ENCODE measurements at regions of chr3 and their contacts with region 1.

Region 1: DNA sequence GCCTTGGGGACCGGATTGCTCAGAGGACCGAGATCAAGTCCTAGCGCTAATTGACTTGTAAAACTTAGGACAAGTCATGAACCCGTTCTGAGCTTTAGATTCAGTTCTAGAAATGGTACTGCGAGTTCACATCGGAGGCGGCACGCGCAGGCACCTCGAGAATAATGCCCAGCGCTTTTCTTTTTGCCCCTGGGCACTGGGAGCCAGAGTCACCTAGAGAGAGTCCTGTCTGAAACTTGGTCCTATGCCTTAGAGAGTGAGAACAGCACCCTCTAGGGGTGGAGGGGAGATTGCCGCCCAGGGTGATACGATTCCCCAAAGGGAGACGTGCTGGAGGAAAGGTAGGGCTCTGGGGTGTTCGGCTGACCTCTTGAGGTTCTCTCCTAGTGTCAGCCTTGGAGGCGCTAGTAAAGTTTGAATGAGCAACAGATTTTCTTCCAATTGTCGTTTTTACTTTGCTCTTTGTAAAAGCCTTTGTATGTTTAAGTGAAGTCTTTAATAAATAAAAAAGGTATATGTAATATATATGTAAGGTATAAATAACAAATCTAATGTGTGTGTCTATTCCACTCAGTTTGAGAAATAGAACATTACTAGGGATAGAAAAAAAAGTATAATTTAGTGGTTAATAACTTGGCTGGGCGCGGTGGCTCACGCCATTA is 826 bp downstream of the EEF1AKMT4 start:
- DNase-seq: peak; percentile 90
- H3K4me3 ChIP-seq: peak overlapping the region; percentile 74 to 97 (median 79)
- H3K27ac ChIP-seq: peak overlapping the region; percentile 73
- H3K4me1 ChIP-seq: peaks cover 6% of the 10 kb centered on the region
- H3K27me3 ChIP-seq: no peaks in the 10 kb centered on the region
- CTCF ChIP-seq: peak; percentile 96 to 98

Region 2: DNA sequence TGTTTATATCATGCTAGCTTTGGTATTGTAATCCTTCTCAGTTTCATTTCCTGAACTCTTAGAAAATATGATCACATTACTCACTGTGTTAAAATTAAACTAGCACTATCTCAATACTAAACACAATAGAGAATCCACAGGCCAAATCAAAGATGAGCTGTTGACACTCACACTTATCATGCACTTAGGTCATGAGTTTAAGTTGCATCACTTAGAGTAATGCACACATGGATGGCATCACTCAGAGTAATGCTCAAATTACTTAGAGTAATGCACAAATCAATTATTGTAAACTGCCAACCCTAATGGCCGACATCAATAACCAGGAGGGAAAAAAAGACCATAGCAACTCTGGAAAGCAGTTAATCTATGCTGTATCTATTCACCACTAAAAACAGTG is 781.9 kb before region 1 on chr3:
- CTCF ChIA-PET with region 1: no interaction called
- dilution Hi-C with region 1: no loop called
- in situ Hi-C with region 1: no loop called
- intact Hi-C with region 1: loop called (anchors 1 kb)
- DNase-seq: no peak
- H3K4me3 ChIP-seq: no peak overlapping the region
- H3K27ac ChIP-seq: no peak overlapping the region
- H3K4me1 ChIP-seq: no peaks in the 10 kb centered on the region
- H3K27me3 ChIP-seq: peaks cover 2% of the 10 kb centered on the region
- CTCF ChIP-seq: no peak

Region 3: GRCh38 chr3:184135149-184135910 is 115.0 kb before region 1 on chr3 and contains the start of gene EIF2B5:
- CTCF ChIA-PET with region 1: no interaction called
- dilution Hi-C with region 1: no loop called
- in situ Hi-C with region 1: loop called in 1 of 2 experiments (anchors 5 kb)
- intact Hi-C with region 1: no loop called
- DNase-seq: peak; percentile 87
- H3K4me3 ChIP-seq: peak within 1 kb of the TSS; percentile 51 to 88 (median 86)
- H3K27ac ChIP-seq: peak within 1 kb of the TSS; percentile 51
- H3K4me1 ChIP-seq: peaks cover 12% of the 10 kb centered on the region
- H3K27me3 ChIP-seq: no peaks in the 10 kb centered on the region
- CTCF ChIP-seq: peak in 1 of 2 donors; percentile 47
- total RNA-seq, gene EIF2B5: 24.5 to 34.8 TPM

Region 4: DNA sequence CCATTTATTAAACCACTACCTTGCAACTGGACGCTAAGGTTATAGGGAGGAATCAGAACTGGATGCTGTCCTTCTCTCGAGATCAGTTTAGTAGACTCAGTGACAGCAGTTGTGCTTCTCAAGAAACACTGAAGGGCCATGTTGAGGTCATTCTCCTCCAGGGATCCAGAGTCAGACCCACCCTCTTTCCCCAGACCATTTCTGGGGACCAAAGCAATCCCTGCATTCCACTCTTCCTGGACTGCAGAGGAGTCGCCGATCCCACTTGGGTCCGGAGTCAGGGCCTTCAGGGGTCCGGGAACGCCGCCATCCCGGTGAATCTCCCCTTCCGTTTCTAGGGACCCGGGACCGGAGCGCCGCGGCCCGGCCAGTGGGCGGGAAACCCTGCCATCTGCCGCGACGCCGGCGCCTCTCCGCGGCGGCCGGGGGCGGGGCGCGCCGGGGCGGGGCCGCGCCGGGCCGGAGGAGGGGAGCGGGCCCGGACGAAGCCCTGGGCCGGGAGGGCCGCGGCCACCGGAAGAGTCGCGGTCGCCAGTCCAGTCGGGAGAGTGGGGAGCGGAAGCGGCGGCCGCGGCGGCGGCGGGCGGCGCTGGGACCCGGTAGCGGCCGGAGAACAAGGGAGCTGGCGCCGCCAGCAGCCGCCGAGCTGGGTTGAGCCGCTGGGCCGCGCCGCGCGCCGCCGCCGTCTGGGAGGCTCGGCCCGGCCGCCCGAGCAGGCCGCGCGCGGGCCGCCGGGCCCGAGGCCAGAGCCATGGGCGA is 95.2 kb before region 1 on chr3 and contains the start of gene DVL3:
- CTCF ChIA-PET with region 1: no interaction called
- dilution Hi-C with region 1: no loop called
- in situ Hi-C with region 1: no loop called
- intact Hi-C with region 1: loop called (anchors 2 kb)
- DNase-seq: peak; percentile 64
- H3K4me3 ChIP-seq: peak within 1 kb of the TSS; percentile 66 to 88 (median 86)
- H3K27ac ChIP-seq: peak within 1 kb of the TSS; percentile 14
- H3K4me1 ChIP-seq: peaks cover 12% of the 10 kb centered on the region
- H3K27me3 ChIP-seq: no peaks in the 10 kb centered on the region
- CTCF ChIP-seq: no peak
- total RNA-seq, gene DVL3: 35.2 to 58.7 TPM

Region 5: DNA sequence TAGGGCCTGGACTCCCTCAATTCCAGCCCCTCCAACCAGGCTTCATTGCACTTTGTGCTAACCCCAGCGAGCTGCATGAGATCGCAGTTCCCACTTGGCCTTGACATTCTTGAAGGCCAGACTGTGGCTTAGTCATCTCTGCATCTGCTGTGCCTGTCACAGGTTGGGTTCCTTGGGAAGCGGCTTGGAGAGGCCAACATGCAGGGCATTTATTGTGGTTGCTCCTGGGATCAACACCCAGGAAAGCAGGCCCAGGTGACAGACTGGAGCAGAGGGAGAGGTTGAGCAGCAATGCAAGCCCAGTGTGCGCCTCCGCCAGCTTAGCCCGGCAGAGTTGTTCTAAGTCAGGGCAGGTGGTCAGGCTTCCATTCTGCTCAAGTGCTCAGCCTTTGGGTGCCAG is 53.8 kb before region 1 on chr3:
- CTCF ChIA-PET with region 1: no interaction called
- dilution Hi-C with region 1: no loop called
- in situ Hi-C with region 1: no loop called
- intact Hi-C with region 1: no loop called
- DNase-seq: no peak
- H3K4me3 ChIP-seq: no peak overlapping the region
- H3K27ac ChIP-seq: no peak overlapping the region
- H3K4me1 ChIP-seq: no peaks in the 10 kb centered on the region
- H3K27me3 ChIP-seq: no peaks in the 10 kb centered on the region
- CTCF ChIP-seq: no peak

Region 6: GRCh38 chr3:184229394-184230080 is 20.8 kb before region 1 on chr3 and contains the start of gene VWA5B2:
- CTCF ChIA-PET with region 1: no interaction called
- dilution Hi-C with region 1: no loop called
- in situ Hi-C with region 1: no loop called
- intact Hi-C with region 1: loop called (anchors 1 kb)
- DNase-seq: peak; percentile 43
- H3K4me3 ChIP-seq: peak within 1 kb of the TSS in 2 of 3 experiments; percentile 29 to 32
- H3K27ac ChIP-seq: no peak within 1 kb of the TSS
- H3K4me1 ChIP-seq: peaks cover 29% of the 10 kb centered on the region
- H3K27me3 ChIP-seq: peaks cover 30% of the 10 kb centered on the region
- CTCF ChIP-seq: no peak
- total RNA-seq, gene VWA5B2: 0.19 to 0.33 TPM

Measured in mammary epithelial cell (primary cell).